ENCODE measurements at regions of chr22 and their contacts with region 1.

Region 1: GRCh38 chr22:49992921-49993648 is 19.5 kb downstream of the IL17REL start:
- H3K4me3 ChIP-seq: no peak overlapping the region
- H3K27ac ChIP-seq: no peak overlapping the region
- H3K4me1 ChIP-seq: no peaks in the 10 kb centered on the region
- CTCF ChIP-seq: peak; percentile 77

Region 2: GRCh38 chr22:49979587-49980264 is 13.4 kb before region 1 on chr22:
- CTCF ChIA-PET with region 1: interaction called, 11 read pairs
- POLR2A ChIA-PET with region 1: interaction called, 3 read pairs
- H3K4me3 ChIP-seq: no peak overlapping the region
- H3K27ac ChIP-seq: no peak overlapping the region
- H3K4me1 ChIP-seq: no peaks in the 10 kb centered on the region
- CTCF ChIP-seq: no peak

Measured in HEK293 (cell line).